Dorsolateral prefrontal cortex (tissue), 120 donors: ENCODE measurements at regions of chr12 and their contacts with region 1.

Region 1: GRCh38 chr12:39764944-39765560 is 145.4 kb upstream of the ABCD2 start:
- DNase-seq: no peak
- H3K4me3 ChIP-seq: no peak overlapping the region
- H3K27ac ChIP-seq: no peak overlapping the region
- H3K27me3 ChIP-seq: no peaks in the 10 kb centered on the region
- CTCF ChIP-seq: peak; percentile 45 to 84 (median 74)

Region 2: DNA sequence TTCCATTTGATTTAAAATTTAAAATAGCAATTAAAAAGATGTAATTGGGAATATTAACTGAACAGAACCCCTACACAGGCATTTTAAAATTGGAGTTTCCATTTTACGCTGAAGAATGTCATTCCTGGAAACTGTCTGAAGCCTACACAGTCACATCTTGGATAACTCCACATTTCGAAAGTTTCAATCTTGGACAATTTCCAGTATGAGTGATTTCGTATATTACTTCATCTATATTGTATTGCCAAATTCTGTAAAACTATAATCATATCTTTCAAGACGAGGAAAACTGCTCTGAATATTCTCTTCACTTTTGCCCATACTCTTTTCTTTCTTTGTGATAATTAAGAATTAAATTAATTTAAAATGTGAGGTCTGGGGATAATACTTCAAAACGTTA is 48.7 kb after region 1 on chr12:
- intact Hi-C with region 1: no loop called
- DNase-seq: no peak
- H3K4me3 ChIP-seq: no peak overlapping the region
- H3K27ac ChIP-seq: no peak overlapping the region
- H3K27me3 ChIP-seq: no peaks in the 10 kb centered on the region
- CTCF ChIP-seq: no peak

Region 3: DNA sequence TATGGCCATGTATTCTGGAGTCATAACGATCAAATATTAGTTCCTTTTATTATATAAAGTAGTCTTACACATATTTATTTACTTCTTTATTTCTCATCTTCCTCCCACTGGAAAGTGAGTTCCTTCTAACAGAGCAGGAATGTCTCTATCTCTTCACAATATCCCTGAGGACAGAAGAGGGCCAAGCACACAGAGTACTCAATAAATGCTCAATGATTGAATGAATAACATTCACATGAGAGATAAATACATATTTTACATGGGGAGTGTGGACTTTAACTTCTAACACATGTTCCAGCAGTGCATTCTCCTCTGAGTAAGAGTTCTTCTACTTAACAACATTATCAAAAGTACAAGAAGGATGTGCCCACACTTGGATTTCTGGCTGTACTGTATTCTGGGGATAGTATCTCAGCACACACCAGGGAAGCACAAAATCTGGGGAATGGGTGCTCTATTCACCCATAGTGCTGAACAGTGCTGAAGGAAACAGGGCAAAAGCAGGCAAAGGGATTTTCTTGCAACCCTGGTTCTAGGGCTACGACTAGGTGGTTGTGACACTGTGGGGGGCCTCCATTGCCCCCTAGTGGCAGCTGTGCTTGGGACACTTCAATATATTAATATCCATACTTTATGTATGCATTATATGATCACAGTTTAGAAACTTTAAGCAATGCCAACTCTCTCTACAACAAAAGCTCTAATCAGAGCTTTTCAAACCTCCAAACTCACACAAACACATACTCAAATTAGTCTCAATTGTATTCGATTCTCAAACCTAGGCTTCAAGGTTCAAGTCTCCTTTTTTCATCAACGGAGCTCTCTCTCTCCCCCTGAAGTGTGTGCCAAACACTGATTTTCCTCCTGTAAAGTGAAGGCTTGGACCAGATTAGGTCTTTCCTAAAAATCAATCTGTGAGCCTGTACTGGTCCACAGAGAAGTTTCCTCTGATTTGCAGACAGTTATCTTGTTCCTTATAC is 225.4 kb after region 1 on chr12:
- intact Hi-C with region 1: loop called (anchors 5 to 10 kb)
- DNase-seq: peak in 7 of 10 donors; percentile 21 to 68 (median 49)
- H3K4me3 ChIP-seq: no peak overlapping the region
- H3K27ac ChIP-seq: peak overlapping the region in 14 of 59 donors; percentile 2 to 70 (median 32)
- H3K27me3 ChIP-seq: no peaks in the 10 kb centered on the region
- CTCF ChIP-seq: peak; percentile 52 to 81 (median 66)